Left lung (tissue), 14 donors: ENCODE measurements at regions of chr5 and their contacts with region 1.

Region 1: DNA sequence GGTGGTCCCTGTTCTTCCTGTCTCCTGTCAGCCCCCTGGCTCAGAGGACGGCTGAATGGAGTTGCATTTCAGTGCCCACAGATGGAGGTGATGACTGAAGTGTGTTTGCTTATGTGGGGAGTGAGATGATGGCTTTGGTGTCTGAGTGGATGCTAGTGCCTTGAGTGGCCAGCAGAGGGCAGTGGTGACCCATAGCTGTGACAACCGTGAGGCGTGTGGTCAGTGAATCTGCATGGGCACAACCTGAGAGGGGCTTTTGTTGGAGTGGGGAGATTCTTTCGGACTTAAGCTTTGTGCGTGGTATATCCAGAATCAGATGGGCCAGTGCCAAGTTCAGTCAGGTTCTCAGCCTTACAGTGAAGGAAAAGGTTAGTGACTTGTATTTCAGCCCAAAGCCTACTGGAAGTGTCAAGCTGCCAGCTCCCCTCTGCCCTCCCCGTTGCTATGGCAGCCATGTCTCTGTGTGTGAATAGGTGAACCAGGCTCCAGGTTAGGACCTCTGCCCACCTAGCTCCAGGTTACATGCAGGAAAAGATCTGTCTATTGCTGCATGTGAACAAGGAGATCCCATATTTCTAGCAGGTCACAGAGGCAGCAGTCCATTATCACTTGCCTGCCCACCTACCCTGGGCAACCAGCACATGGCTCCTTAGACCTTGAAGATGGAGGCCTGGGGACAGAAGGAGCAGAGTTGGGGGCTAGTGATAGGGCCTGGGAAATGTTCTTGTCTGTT is 14.7 kb upstream of the CXXC5 start:
- DNase-seq: peak in 3 of 4 donors; percentile 61 to 82 (median 70)
- ATAC-seq: peak; percentile 52
- H3K4me3 ChIP-seq: no peak overlapping the region
- H3K27ac ChIP-seq: no peak overlapping the region
- H3K4me1 ChIP-seq: peaks cover 29 to 46% of the 10 kb centered on the region in 2 donors
- H3K27me3 ChIP-seq: peaks cover 0 to 17% of the 10 kb centered on the region in 2 donors
- CTCF ChIP-seq: peak; percentile 89 to 92

Region 2: GRCh38 chr5:139689631-139690063 is 56.2 kb after region 1 on chr5:
- intact Hi-C with region 1: loop called (anchors 5 to 10 kb)
- DNase-seq: no peak
- ATAC-seq: peak; percentile 35
- H3K4me3 ChIP-seq: no peak overlapping the region
- H3K27ac ChIP-seq: no peak overlapping the region
- H3K4me1 ChIP-seq: peaks cover 10 to 17% of the 10 kb centered on the region in 2 donors
- H3K27me3 ChIP-seq: peaks cover 0 to 16% of the 10 kb centered on the region in 2 donors
- CTCF ChIP-seq: no peak

Region 3: GRCh38 chr5:139696894-139697658 is 63.6 kb after region 1 on chr5:
- intact Hi-C with region 1: loop called in 1 of 2 experiments (anchors 10 kb)
- DNase-seq: peak; percentile 70 to 89 (median 80)
- ATAC-seq: peak; percentile 74
- H3K4me3 ChIP-seq: peak overlapping the region; percentile 21 to 23
- H3K27ac ChIP-seq: peak overlapping the region; percentile 51 to 76
- H3K4me1 ChIP-seq: peaks cover 23 to 28% of the 10 kb centered on the region in 2 donors
- H3K27me3 ChIP-seq: peaks cover 0 to 59% of the 10 kb centered on the region in 2 donors
- CTCF ChIP-seq: no peak

Region 4: DNA sequence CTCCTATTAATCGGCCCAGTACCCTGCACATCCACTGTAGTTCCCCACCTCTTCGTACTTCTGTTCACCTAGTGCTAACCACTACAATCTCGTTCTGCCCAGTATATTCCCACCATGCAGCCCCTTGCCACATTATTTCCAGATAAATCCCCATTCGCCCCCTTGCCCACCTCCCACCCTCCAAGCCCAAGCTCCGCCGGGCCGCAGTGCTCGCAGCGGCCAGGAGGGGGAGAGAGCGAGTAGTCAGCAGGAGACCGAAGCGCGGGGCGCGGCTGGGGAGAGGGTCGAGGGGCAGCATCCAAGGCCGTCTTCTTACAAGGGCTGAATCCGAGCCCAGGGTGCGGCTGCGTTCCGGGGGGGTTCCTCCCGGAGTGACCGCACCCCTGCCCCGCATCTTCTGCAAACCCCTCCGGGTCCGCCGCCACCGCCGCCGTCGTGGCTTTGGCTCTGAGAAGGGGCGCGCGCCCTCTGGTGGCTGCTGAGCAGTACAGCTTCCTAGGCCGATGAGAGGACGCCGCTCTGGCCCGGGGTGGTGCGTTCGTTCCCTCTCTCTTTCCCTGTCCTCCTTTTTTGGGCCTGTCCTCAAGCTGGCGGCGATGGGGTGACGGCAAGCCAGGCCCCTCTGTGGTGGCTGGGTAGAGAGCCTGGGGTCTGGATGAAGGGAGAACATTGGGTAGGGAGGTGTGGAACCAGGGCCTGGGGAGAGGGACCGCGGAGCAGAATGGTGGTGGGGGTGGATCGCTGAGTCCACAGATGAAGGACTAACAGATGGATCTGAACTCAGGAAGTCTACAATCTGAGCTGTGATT is 132.2 kb after region 1 on chr5:
- intact Hi-C with region 1: loop called (anchors 2 to 10 kb)
- DNase-seq: peak; percentile 79 to 97 (median 84)
- ATAC-seq: peak; percentile 96
- H3K4me3 ChIP-seq: peak overlapping the region; percentile 33 to 52
- H3K27ac ChIP-seq: no peak overlapping the region
- H3K4me1 ChIP-seq: peaks cover 0 to 4% of the 10 kb centered on the region in 2 donors
- H3K27me3 ChIP-seq: peaks cover 14 to 42% of the 10 kb centered on the region in 2 donors
- CTCF ChIP-seq: peak; percentile 94 to 97